ENCODE measurements at regions of chr12 and their contacts with region 1.

Region 1: GRCh38 chr12:113092607-113093408 is 36.3 kb downstream of the DTX1 start:
- DNase-seq: no peak
- H3K4me3 Mint-ChIP-seq: no peak overlapping the region
- H3K27ac Mint-ChIP-seq: no peak overlapping the region
- H3K4me1 Mint-ChIP-seq: peaks cover 16% of the 10 kb centered on the region
- H3K27me3 Mint-ChIP-seq: no peaks in the 10 kb centered on the region

Region 2: GRCh38 chr12:112900299-112901145 is 192.3 kb before region 1 on chr12:
- intact Hi-C with region 1: loop called (anchors 5 kb)
- DNase-seq: peak; percentile 85
- H3K4me3 Mint-ChIP-seq: no peak overlapping the region
- H3K27ac Mint-ChIP-seq: peak overlapping the region; percentile 50
- H3K4me1 Mint-ChIP-seq: peaks cover 30% of the 10 kb centered on the region
- H3K27me3 Mint-ChIP-seq: peaks cover 18% of the 10 kb centered on the region

Region 3: GRCh38 chr12:113241191-113242025 is 148.6 kb after region 1 on chr12:
- intact Hi-C with region 1: no loop called
- DNase-seq: no peak
- H3K4me3 Mint-ChIP-seq: no peak overlapping the region
- H3K27ac Mint-ChIP-seq: no peak overlapping the region
- H3K4me1 Mint-ChIP-seq: peaks cover 18% of the 10 kb centered on the region
- H3K27me3 Mint-ChIP-seq: no peaks in the 10 kb centered on the region

Measured in activated CD4-positive, alpha-beta T cell treated with anti-CD3 and anti-CD28 coated beads, Interleukin-2, amount 10 ng/mL, durations not matched to agents 24 days and 14 days (primary cell).